ENCODE measurements at regions of chr4 and their contacts with region 1.

Region 1: DNA sequence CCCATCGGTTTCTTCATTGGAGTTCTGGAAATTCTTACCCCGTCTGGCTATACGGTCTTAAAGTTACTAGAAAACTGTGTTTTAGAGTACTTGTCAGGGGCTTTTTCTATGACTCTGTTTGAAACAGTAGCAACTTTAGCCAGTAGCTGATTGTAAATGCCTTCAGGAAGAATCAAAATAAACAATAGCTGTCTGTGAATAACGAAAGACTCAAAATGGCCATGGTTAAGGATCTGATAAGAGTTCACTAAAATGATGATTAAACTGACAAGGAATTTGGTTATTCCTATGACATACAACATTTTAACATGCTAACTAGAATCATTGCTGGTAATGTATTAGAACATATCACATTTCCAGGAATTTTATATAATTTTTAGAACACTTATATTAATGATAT is 191.0 kb downstream of the EVC2 start:
- DNase-seq: no peak

Region 2: GRCh38 chr4:5588046-5588445 is 70.7 kb after region 1 on chr4:
- intact Hi-C with region 1: loop called (anchors 2 kb)
- DNase-seq: no peak